ENCODE measurements at regions of chr3 and their contacts with region 1.

Region 1: DNA sequence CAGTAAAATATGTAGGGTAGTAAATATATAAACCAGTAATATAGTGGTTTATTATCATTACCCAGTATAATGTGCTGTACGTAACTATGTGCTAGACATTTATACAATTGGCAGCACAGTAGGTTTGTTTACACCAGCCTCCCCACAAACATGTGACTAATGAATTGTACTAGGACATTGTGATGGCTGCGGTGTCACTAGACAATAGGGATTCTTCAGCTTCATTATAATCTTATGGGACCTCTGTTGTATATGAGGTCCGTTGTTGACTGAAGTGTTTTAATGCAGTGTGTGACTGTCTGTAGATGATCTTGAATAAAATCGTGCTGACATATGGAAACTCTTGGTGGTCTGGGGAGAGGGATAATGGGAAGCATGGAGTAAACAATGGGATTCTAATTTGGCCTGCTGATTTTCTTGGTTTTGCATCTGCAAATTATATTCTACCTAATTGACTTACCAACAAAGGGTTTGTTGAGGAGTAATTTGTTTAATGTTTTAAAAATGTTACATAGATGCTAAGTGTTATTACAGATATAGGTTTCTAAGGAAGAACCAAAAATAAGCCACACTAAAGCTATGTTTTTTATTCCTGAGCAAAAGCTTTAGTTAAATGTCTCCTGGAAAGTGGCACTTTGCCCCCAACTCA is 496.5 kb upstream of the TBL1XR1 start:
- DNase-seq: no peak
- ATAC-seq: no peak
- H3K4me3 ChIP-seq: no peak overlapping the region
- H3K27ac ChIP-seq: no peak overlapping the region
- H3K4me1 ChIP-seq: no peaks in the 10 kb centered on the region
- H3K27me3 ChIP-seq: no peaks in the 10 kb centered on the region
- CTCF ChIP-seq: no peak

Region 2: GRCh38 chr3:177512945-177513814 is 180.6 kb before region 1 on chr3:
- CTCF ChIA-PET with region 1: no interaction called
- POLR2A ChIA-PET with region 1: no interaction called
- in situ Hi-C with region 1: no loop called
- intact Hi-C with region 1: no loop called
- DNase-seq: no peak
- ATAC-seq: no peak
- H3K4me3 ChIP-seq: no peak overlapping the region
- H3K27ac ChIP-seq: peak overlapping the region; percentile 86; the same call in 1 of the 2 replicates
- H3K4me1 ChIP-seq: peaks cover 17% of the 10 kb centered on the region
- H3K27me3 ChIP-seq: no peaks in the 10 kb centered on the region
- CTCF ChIP-seq: no peak

Region 3: GRCh38 chr3:177622541-177622940 is 71.2 kb before region 1 on chr3:
- CTCF ChIA-PET with region 1: no interaction called
- POLR2A ChIA-PET with region 1: interaction called, 13 read pairs
- in situ Hi-C with region 1: no loop called
- intact Hi-C with region 1: no loop called
- DNase-seq: no peak
- ATAC-seq: no peak
- H3K4me3 ChIP-seq: no peak overlapping the region
- H3K27ac ChIP-seq: peak overlapping the region; percentile 90
- H3K4me1 ChIP-seq: peaks cover 18% of the 10 kb centered on the region
- H3K27me3 ChIP-seq: no peaks in the 10 kb centered on the region
- CTCF ChIP-seq: peak; percentile 12; the same call in 1 of the 2 replicates

Measured in Panc1 (cell line).